ENCODE measurements at regions of chr1 and their contacts with region 1.

Region 1: DNA sequence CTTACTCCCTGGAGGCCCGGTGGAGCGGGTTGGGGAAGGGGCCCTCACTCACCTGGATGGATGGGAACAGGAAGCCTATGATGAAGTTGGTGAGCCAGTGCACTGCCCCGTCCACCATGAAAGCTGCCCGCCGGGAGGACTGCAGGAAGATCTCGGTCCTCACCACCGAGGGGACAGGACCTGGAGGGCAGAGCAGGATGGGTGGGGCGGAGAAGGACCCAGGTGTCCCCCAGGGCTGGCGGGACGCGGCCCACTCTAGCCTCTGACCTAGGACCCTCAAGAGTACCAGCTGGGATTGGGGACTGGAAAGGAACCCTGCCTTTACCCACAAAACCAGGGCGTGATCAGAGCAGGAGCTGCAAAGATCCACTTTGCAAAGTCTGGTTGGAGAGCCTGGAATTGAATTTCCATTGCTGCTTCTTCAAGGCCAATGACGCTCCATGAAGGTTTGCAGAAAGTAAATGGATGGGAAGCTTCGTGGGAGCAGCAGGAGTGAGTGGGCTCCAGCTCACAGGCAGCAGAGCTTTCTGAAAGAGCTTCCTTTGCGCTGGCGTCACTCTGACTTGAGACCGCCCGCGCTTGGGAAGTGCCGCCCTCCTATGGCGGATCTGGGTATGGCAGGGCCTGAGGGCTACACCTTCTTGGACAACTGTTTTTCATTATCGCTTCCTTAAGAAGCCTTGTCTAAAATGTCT is 21.4 kb downstream of the SLC2A7 start:
- DNase-seq: peak; percentile 72
- ATAC-seq: peak; percentile 85
- H3K4me3 ChIP-seq: no peak overlapping the region
- H3K27ac ChIP-seq: no peak overlapping the region
- H3K4me1 ChIP-seq: peaks cover 0 to 12% of the 10 kb centered on the region in 2 experiments; a peak in 3 of 4 replicates
- H3K27me3 ChIP-seq: no peaks in the 10 kb centered on the region
- CTCF ChIP-seq: peak; percentile 78 to 96 (median 93)
- POLR2A ChIP-seq: no peak
- RAD21 ChIP-seq: peak; percentile 87

Region 2: GRCh38 chr1:8913111-8913856 is 91.6 kb before region 1 on chr1:
- CTCF ChIA-PET with region 1: interaction called, 62 read pairs
- POLR2A ChIA-PET with region 1: interaction called, 4 read pairs
- RAD21 ChIA-PET with region 1: interaction called, 4 to 11 read pairs
- intact Hi-C with region 1: loop called (anchors 1 kb)
- DNase-seq: no peak
- ATAC-seq: no peak
- H3K4me3 ChIP-seq: no peak overlapping the region
- H3K27ac ChIP-seq: no peak overlapping the region
- H3K4me1 ChIP-seq: peaks cover 0 to 4% of the 10 kb centered on the region in 2 experiments; a peak in 2 of 4 replicates
- H3K27me3 ChIP-seq: no peaks in the 10 kb centered on the region; the same call in 1 of the 2 replicates
- CTCF ChIP-seq: no peak
- POLR2A ChIP-seq: no peak
- RAD21 ChIP-seq: no peak

Region 3: DNA sequence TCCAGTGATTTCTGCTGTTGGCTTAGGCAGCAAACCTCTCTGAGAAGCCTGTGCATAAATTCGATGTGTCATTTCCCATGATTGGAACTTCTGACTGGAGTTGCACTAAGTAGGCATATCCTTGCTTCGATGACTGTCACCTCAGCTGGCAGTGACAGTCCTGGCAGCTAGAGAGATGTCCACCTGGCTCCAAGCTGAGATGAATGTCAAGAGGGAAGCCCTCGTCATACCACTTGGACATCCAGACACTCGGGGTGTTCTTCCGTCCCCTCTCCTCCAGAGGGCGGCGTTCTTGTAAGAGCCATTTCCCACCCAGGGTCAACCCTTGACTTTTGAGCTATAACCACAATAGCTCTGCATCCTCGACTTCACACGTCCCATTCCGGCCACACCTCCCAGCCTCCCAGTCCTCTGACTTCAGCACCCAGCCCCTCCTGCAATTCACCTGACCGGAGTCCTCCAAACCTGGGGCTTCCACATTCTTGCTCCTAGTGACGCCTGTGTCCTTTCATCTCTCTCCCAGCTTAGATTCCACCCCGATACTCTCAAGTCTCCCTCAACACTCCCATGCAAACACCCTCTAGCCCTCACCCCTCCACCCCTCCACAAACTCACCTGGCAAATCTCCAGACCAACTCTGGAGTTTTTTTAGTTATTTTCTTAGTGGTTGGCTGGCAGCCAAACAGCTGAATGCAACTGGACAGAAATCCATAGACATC is 41.9 kb before region 1 on chr1:
- CTCF ChIA-PET with region 1: interaction called, 17 read pairs
- POLR2A ChIA-PET with region 1: no interaction called
- RAD21 ChIA-PET with region 1: interaction called in 1 of 2 experiments, 7 read pairs
- intact Hi-C with region 1: no loop called
- DNase-seq: peak; percentile 68
- ATAC-seq: peak; percentile 98
- H3K4me3 ChIP-seq: no peak overlapping the region
- H3K27ac ChIP-seq: no peak overlapping the region
- H3K4me1 ChIP-seq: peaks cover 0 to 13% of the 10 kb centered on the region in 2 experiments; a peak in 2 of 4 replicates
- H3K27me3 ChIP-seq: no peaks in the 10 kb centered on the region
- CTCF ChIP-seq: peak; percentile 52 to 81 (median 71)
- POLR2A ChIP-seq: no peak
- RAD21 ChIP-seq: peak; percentile 52

Region 4: DNA sequence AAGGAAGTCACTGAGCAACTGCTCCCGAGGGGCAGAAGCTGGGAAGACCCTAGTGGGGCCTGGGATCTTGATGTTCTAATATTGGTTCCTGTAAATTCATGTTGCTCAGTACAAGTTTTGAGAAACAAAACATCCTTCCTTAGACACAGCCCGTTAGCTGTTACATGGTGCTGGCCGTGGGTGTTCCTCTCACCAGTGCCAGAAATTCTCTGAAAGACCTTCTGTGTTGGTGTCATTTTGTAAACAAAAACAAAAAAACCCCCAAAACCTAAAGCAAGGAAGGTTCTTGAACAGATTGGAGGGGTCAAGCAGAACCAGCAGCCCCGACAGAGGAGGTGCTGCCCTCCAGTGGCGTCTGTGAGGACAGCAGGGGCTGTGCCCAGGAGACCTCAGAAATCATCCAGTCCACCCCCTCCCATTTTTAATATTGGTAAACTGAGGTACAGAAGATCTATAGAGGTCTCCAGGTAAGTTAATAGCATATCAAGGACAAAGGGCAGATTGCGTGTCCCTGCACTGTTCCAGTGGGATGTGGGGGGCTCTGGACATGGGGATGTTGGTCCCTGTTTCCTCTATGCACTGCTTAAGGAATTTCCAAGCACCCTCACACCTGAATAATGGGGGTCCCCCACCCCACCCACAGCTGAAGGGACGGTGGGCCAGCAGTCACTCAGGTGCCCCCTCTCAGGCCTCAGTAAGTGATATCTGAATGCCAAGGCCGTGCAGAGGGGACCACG is 16.8 kb before region 1 on chr1:
- CTCF ChIA-PET with region 1: interaction called, 16 read pairs
- POLR2A ChIA-PET with region 1: interaction called, 3 read pairs
- RAD21 ChIA-PET with region 1: interaction called, 3 read pairs
- intact Hi-C with region 1: no loop called
- DNase-seq: no peak
- ATAC-seq: peak; percentile 82
- H3K4me3 ChIP-seq: no peak overlapping the region
- H3K27ac ChIP-seq: no peak overlapping the region
- H3K4me1 ChIP-seq: peaks cover 13 to 35% of the 10 kb centered on the region in 2 experiments
- H3K27me3 ChIP-seq: no peaks in the 10 kb centered on the region
- CTCF ChIP-seq: peak; percentile 81 to 98 (median 91)
- POLR2A ChIP-seq: no peak
- RAD21 ChIP-seq: peak; percentile 85

Region 5: DNA sequence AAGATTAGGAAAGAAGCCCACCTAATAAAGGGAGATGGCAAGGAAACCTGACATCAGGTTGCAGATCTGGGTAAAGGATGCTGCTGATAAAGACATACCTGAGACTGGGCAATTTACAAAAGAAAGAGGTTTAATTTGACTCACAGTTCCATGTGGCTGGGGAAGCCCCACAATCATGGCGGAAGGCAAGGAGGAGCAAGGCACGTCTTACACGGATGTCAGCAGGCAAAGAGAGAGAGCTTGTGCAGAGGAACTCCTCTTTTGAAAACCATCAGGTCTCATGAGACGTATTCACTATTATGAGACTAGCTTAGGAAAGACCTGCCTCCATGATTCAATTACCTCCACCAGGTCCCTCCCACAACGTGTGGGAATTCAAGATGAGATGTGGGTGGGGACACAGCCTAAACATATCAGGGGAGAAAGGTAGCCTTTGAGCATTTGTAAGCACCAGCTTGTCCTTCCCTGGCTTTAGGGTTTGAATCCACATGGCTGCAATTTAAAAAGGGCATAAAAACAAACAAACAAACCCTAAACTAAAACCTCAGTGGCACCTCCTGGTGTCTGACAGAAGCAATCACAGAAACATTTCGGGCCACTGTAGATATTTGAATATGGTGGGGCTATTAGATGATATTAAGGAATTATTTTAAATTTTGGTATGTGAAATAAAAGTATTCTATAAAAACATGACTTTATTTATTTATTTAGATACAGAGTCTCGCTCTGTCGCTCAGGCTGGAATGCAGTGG is 11.7 kb before region 1 on chr1:
- CTCF ChIA-PET with region 1: interaction called, 16 read pairs
- POLR2A ChIA-PET with region 1: interaction called, 3 read pairs
- RAD21 ChIA-PET with region 1: interaction called, 3 read pairs
- intact Hi-C with region 1: no loop called
- DNase-seq: no peak
- ATAC-seq: no peak
- H3K4me3 ChIP-seq: no peak overlapping the region
- H3K27ac ChIP-seq: no peak overlapping the region
- H3K4me1 ChIP-seq: no peaks in the 10 kb centered on the region
- H3K27me3 ChIP-seq: no peaks in the 10 kb centered on the region
- CTCF ChIP-seq: peak; percentile 21 to 46 (median 36); a peak in 4 of 6 replicates
- POLR2A ChIP-seq: no peak
- RAD21 ChIP-seq: 0 out of 2 replicates have a peak, but pooled peaks have one; percentile 12

Region 6: DNA sequence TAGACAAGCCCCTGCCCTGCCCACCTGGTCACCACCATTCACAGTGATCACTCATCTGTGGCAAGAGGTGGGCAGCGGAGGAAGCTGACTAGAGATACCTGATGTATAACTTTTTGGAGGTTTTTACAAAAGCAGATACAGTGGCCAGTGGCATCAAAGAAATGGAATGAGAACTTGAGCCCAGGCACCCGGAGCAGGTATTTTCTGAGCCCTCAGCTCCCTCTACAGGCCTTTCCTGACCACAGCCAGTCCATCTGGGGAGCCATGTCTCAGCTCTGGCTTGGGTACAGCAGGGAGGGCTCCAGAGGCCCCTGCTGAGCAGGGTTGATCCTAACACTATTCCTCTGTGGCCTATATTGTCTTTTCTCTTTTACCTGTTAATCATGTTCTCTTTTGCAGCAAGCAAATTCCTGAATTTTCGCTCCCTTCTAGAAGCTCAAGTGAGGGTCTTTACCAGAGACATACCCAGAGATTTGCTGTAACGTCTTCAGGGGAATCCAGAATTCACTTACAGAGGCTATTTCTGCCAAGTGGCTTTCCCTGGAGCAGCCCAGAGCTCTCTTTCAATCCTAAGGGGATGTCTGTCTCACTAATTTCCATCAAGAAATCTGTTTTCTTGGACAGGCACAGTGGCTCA is 96.8 kb after region 1 on chr1:
- CTCF ChIA-PET with region 1: interaction called, 10 read pairs
- POLR2A ChIA-PET with region 1: interaction called, 7 read pairs
- RAD21 ChIA-PET with region 1: interaction called, 4 to 10 read pairs
- intact Hi-C with region 1: loop called (anchors 5 kb)
- DNase-seq: peak; percentile 19
- ATAC-seq: peak; percentile 96
- H3K4me3 ChIP-seq: no peak overlapping the region
- H3K27ac ChIP-seq: no peak overlapping the region
- H3K4me1 ChIP-seq: no peaks in the 10 kb centered on the region
- H3K27me3 ChIP-seq: no peaks in the 10 kb centered on the region
- CTCF ChIP-seq: peak; percentile 67 to 80 (median 70); a peak in 5 of 6 replicates
- POLR2A ChIP-seq: no peak
- RAD21 ChIP-seq: peak; percentile 86

Region 7: DNA sequence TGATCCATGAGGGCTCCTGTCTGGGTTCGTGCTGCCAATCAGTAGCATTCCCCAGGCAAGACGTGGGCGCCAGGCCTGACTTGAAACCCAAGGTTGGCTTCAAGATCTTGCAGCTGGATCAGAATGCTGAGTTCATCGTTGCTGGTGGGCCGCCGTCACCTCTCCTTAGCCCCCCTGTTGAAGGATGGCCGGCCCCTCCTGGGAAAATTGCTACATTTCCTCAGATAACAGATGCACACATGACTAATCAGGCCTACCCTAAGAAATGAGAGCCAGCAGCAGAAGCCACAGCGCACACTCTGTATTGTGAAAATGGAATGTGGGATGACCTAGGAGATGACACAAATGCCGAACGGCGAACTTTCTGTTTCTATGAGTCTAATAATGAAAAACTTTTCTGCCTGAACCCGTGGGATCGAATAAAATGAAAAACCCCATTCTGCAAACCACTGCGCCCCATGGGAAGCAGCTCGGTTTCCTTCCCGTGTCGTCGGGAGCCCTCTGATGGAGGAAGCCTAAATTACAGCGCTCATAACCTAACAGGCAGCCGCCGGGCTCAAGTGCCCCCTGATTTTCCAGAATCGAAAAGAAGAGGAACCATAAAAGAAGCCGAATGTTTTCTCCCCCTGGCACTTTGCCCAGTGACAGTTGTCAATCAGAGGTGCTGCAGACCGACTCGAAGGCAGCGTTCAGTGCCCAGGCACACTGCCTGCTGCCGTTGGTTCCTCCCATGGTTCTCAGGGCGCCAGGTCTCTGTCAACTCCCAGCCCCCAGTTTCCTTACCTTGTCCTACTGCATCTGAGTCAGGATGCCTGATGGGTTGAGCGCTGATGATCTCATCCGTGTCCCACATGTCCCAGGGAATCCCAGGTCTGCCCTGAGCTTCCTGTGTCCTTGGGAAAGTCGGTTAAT is 191.5 kb after region 1 on chr1:
- CTCF ChIA-PET with region 1: interaction called, 5 read pairs
- POLR2A ChIA-PET with region 1: no interaction called
- RAD21 ChIA-PET with region 1: no interaction called
- intact Hi-C with region 1: loop called (anchors 5 kb)
- DNase-seq: no peak
- ATAC-seq: peak; percentile 83
- H3K4me3 ChIP-seq: no peak overlapping the region
- H3K27ac ChIP-seq: no peak overlapping the region
- H3K4me1 ChIP-seq: peaks cover 2 to 18% of the 10 kb centered on the region in 2 experiments; a peak in 2 of 4 replicates
- H3K27me3 ChIP-seq: peaks cover 19% of the 10 kb centered on the region; the same call in 1 of the 2 replicates
- CTCF ChIP-seq: peak; percentile 78 to 95 (median 84)
- POLR2A ChIP-seq: no peak
- RAD21 ChIP-seq: peak; percentile 98

Region 8: GRCh38 chr1:9473032-9473792 is 468.4 kb after region 1 on chr1:
- CTCF ChIA-PET with region 1: no interaction called
- POLR2A ChIA-PET with region 1: no interaction called
- RAD21 ChIA-PET with region 1: no interaction called
- intact Hi-C with region 1: no loop called
- DNase-seq: peak; percentile 12
- ATAC-seq: peak; percentile 76
- H3K4me3 ChIP-seq: no peak overlapping the region
- H3K27ac ChIP-seq: no peak overlapping the region
- H3K4me1 ChIP-seq: peaks cover 0 to 12% of the 10 kb centered on the region in 2 experiments; a peak in 2 of 4 replicates
- H3K27me3 ChIP-seq: no peaks in the 10 kb centered on the region
- CTCF ChIP-seq: no peak
- POLR2A ChIP-seq: no peak
- RAD21 ChIP-seq: no peak

Measured in HCT116 (cell line).